K562 (cell line): ENCODE measurements at regions of chrX and their contacts with region 1.

Region 1: GRCh38 chrX:71181910-71182799 is 37.5 kb downstream of the NLGN3 start:
- DNase-seq: peak; percentile 71 to 96 (median 80)
- ATAC-seq: peak; percentile 96
- H3K4me3 ChIP-seq: peak overlapping the region; percentile 36
- H3K27ac ChIP-seq: peak overlapping the region; percentile 97
- H3K4me1 ChIP-seq: peaks cover 4 to 18% of the 10 kb centered on the region in 2 experiments; a peak in 3 of 5 replicates
- H3K27me3 ChIP-seq: no peaks in the 10 kb centered on the region
- CTCF ChIP-seq: no peak
- EP300 ChIP-seq: no peak
- POLR2A ChIP-seq: peak; percentile 86
- RAD21 ChIP-seq: no peak

Region 2: GRCh38 chrX:70769659-70770232 is 412.4 kb before region 1 on chrX:
- CTCF ChIA-PET with region 1: interaction called, 6 read pairs
- POLR2A ChIA-PET with region 1: no interaction called
- in situ Hi-C with region 1: loop called (anchors 10 kb)
- intact Hi-C with region 1: loop called (anchors 5 kb)
- DNase-seq: peak in 1 of 4 experiments; percentile 9
- ATAC-seq: no peak
- H3K4me3 ChIP-seq: no peak overlapping the region
- H3K27ac ChIP-seq: no peak overlapping the region
- H3K4me1 ChIP-seq: no peaks in the 10 kb centered on the region; a peak in 1 of 5 replicates
- H3K27me3 ChIP-seq: no peaks in the 10 kb centered on the region
- CTCF ChIP-seq: peak in 2 of 3 experiments; percentile 8 to 53; a peak in 2 of 6 replicates
- EP300 ChIP-seq: no peak
- POLR2A ChIP-seq: no peak
- RAD21 ChIP-seq: peak; percentile 50 to 59

Region 3: GRCh38 chrX:70998411-70999027 is 183.6 kb before region 1 on chrX:
- CTCF ChIA-PET with region 1: interaction called, 9 read pairs
- POLR2A ChIA-PET with region 1: no interaction called
- in situ Hi-C with region 1: loop called (anchors 5 kb)
- intact Hi-C with region 1: loop called (anchors 1 kb)
- DNase-seq: peak in 1 of 4 experiments; percentile 67
- ATAC-seq: peak; percentile 84
- H3K4me3 ChIP-seq: no peak overlapping the region
- H3K27ac ChIP-seq: no peak overlapping the region
- H3K4me1 ChIP-seq: peaks cover 0 to 7% of the 10 kb centered on the region in 2 experiments; a peak in 2 of 5 replicates
- H3K27me3 ChIP-seq: no peaks in the 10 kb centered on the region
- CTCF ChIP-seq: peak; percentile 58 to 63 (median 62)
- EP300 ChIP-seq: no peak
- POLR2A ChIP-seq: no peak
- RAD21 ChIP-seq: peak; percentile 60 to 83

Region 4: DNA sequence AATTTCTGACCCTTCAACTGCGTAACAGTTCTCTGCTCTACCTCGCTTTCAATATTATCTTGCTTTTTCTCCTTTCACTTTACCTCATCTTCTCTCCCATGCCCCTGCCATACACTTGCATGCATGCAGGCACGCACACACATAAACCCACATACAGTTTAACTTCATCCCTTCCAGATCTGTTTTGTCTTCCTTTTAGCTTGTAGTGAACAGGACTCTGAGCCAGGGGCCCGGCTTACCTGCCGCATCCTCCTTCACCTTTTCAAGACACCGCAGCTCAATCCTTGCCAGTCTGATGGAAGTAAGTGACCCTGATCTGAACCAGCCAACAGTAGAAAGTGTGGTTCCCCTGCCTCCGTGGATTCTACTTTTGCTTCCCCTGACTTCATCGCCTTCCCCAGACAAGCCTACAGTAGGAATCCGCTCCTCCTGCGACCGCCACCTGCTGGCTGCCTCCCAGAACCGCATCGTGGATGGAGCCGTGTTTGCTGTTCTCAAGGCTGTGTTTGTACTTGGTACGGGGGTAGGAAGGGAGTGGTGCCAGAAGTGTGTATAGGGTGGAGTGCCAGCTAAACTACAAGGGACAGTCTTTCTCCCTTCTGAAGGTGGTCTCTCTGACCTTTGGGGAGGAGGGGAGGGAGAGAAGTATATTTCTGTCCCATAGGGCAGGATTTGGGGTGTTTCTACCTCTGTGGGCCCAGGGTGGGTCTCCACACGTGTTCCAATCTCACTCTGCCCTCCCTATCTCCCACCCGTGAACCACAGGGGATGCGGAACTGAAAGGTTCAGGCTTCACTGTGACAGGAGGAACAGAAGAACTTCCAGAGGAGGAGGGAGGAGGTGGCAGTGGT is 53.0 kb before region 1 on chrX:
- CTCF ChIA-PET with region 1: interaction called, 4 read pairs
- POLR2A ChIA-PET with region 1: no interaction called
- in situ Hi-C with region 1: no loop called
- intact Hi-C with region 1: loop called (anchors 2 kb)
- DNase-seq: peak; percentile 65 to 83 (median 68)
- ATAC-seq: peak; percentile 90
- H3K4me3 ChIP-seq: no peak overlapping the region
- H3K27ac ChIP-seq: peak overlapping the region; percentile 36; the same call in 1 of the 3 replicates
- H3K4me1 ChIP-seq: peaks cover 24 to 34% of the 10 kb centered on the region in 2 experiments; a peak in 4 of 5 replicates
- H3K27me3 ChIP-seq: no peaks in the 10 kb centered on the region
- CTCF ChIP-seq: peak; percentile 80 to 91 (median 88)
- EP300 ChIP-seq: no peak
- POLR2A ChIP-seq: no peak
- RAD21 ChIP-seq: peak; percentile 74 to 83

Region 5: GRCh38 chrX:71326394-71326793 is 144.2 kb after region 1 on chrX:
- CTCF ChIA-PET with region 1: no interaction called
- POLR2A ChIA-PET with region 1: no interaction called
- in situ Hi-C with region 1: no loop called
- intact Hi-C with region 1: no loop called
- DNase-seq: no peak
- ATAC-seq: no peak
- H3K4me3 ChIP-seq: no peak overlapping the region
- H3K27ac ChIP-seq: no peak overlapping the region
- H3K4me1 ChIP-seq: no peaks in the 10 kb centered on the region
- H3K27me3 ChIP-seq: no peaks in the 10 kb centered on the region
- CTCF ChIP-seq: no peak
- EP300 ChIP-seq: no peak
- POLR2A ChIP-seq: no peak
- RAD21 ChIP-seq: no peak